ENCODE measurements at regions of chr2 and their contacts with region 1.

Region 1: GRCh38 chr2:96509114-96509846 is 4.1 kb upstream of the NEURL3 start:
- DNase-seq: peak; percentile 84
- H3K4me3 Mint-ChIP-seq: no peak overlapping the region
- H3K27ac Mint-ChIP-seq: no peak overlapping the region
- H3K4me1 Mint-ChIP-seq: peaks cover 16% of the 10 kb centered on the region
- H3K27me3 Mint-ChIP-seq: peaks cover 18% of the 10 kb centered on the region
- CTCF ChIP-seq: peak; percentile 97

Region 2: DNA sequence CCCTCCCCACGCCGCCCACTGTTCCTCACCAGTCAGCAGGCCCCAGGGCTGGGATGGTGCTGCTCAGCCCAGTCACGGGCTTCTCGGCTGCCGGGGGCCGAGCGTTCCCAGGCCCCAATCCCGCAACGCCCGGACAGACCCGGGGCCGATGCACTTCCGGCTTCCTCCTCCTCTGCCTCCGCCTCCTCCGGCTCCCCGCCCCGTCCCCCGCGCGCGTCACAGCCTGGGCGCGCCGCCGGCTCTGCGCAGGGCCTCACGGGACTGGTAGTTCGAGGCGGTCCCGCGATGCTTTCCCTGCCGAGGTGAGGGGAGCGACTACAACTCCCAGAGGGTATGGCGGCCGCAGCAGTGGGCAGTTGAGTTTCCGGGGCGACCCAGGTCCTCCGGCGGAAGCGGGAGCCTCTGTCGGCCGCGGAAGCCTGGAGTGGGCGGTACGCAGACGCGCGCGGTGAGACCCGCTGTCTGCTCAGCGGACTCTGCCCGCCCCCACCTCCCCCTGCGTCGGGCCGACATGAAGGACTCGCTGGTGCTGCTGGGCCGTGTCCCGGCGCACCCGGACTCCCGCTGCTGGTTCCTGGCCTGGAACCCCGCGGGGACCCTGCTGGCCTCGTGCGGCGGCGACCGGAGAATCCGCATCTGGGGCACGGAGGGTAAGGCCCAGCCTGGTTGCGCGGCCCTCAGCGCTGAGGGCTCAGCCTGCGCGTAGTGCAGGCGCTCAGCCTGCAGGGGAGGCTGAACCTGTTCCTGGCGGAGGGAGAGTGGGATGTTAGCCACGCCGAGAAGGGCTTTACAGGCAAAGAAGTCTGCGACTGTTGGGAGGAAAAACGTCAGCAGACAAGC is 243.2 kb before region 1 on chr2 and contains the starts of genes CIAO1 and TMEM127:
- CTCF ChIA-PET with region 1: interaction called, 7 read pairs
- POLR2A ChIA-PET with region 1: interaction called, 3 read pairs
- intact Hi-C with region 1: loop called (anchors 5 kb)
- DNase-seq: peak; percentile 98
- H3K4me3 Mint-ChIP-seq: peak within 1 kb of the TSS; percentile 93
- H3K27ac Mint-ChIP-seq: peak within 1 kb of the TSS; percentile 68
- H3K4me1 Mint-ChIP-seq: peaks cover 25% of the 10 kb centered on the region
- H3K27me3 Mint-ChIP-seq: no peaks in the 10 kb centered on the region
- CTCF ChIP-seq: no peak
- total RNA-seq, gene CIAO1: 62.3 and 63.3 TPM in 2 replicates
- total RNA-seq, gene TMEM127: 31.5 and 40.0 TPM in 2 replicates

Region 3: GRCh38 chr2:96359310-96359709 is 150.0 kb before region 1 on chr2:
- CTCF ChIA-PET with region 1: interaction called, 4 read pairs
- POLR2A ChIA-PET with region 1: no interaction called
- intact Hi-C with region 1: loop called (anchors 1 kb)
- DNase-seq: no peak
- H3K4me3 Mint-ChIP-seq: no peak overlapping the region
- H3K27ac Mint-ChIP-seq: no peak overlapping the region
- H3K4me1 Mint-ChIP-seq: no peaks in the 10 kb centered on the region
- H3K27me3 Mint-ChIP-seq: no peaks in the 10 kb centered on the region
- CTCF ChIP-seq: peak; percentile 10

Region 4: GRCh38 chr2:96493072-96493471 is 16.2 kb before region 1 on chr2:
- CTCF ChIA-PET with region 1: interaction called, 25 read pairs
- POLR2A ChIA-PET with region 1: no interaction called
- intact Hi-C with region 1: no loop called
- DNase-seq: peak; percentile 86
- H3K4me3 Mint-ChIP-seq: no peak overlapping the region
- H3K27ac Mint-ChIP-seq: no peak overlapping the region
- H3K4me1 Mint-ChIP-seq: peaks cover 5% of the 10 kb centered on the region
- H3K27me3 Mint-ChIP-seq: peaks cover 13% of the 10 kb centered on the region
- CTCF ChIP-seq: no peak

Region 5: DNA sequence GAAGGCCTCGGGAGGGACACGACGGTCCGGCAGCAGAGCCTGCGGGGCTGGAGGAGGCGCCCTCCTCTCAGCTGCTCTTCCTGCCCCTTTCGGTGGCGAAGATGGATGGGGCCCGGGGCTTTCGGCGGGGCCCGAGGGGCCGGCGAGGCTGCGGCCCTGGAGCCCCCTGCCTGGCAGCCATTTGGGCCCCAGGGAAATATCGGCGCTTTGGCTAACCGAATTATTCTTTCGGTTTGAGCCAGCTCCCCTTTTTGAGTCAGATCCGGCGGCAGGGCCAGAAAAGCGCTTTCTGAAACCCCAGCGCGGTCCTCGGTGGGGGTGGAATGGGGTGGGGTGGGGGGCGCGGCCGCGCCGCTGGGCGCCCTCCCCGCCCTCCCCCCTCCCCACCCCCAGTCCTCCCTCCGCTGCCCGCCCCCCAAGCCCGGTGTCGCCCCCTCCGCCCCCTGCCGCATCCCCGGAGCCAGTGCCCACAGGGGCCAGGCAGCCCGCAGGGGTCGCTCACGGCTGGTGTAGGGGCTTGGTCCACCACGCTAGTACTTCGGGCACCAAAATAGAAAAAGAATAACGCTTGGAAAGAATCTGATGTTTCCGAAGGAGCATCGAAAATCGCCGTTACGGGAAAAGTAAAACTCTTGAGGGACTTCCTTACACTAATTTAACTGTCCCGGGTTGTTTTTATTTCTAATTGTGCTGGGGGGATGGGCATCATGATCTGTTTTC is 18.2 kb after region 1 on chr2:
- CTCF ChIA-PET with region 1: interaction called, 10 read pairs
- POLR2A ChIA-PET with region 1: interaction called, 3 read pairs
- intact Hi-C with region 1: no loop called
- DNase-seq: no peak
- H3K4me3 Mint-ChIP-seq: no peak overlapping the region
- H3K27ac Mint-ChIP-seq: no peak overlapping the region
- H3K4me1 Mint-ChIP-seq: peaks cover 4% of the 10 kb centered on the region
- H3K27me3 Mint-ChIP-seq: peaks cover 15% of the 10 kb centered on the region
- CTCF ChIP-seq: no peak

Region 6: DNA sequence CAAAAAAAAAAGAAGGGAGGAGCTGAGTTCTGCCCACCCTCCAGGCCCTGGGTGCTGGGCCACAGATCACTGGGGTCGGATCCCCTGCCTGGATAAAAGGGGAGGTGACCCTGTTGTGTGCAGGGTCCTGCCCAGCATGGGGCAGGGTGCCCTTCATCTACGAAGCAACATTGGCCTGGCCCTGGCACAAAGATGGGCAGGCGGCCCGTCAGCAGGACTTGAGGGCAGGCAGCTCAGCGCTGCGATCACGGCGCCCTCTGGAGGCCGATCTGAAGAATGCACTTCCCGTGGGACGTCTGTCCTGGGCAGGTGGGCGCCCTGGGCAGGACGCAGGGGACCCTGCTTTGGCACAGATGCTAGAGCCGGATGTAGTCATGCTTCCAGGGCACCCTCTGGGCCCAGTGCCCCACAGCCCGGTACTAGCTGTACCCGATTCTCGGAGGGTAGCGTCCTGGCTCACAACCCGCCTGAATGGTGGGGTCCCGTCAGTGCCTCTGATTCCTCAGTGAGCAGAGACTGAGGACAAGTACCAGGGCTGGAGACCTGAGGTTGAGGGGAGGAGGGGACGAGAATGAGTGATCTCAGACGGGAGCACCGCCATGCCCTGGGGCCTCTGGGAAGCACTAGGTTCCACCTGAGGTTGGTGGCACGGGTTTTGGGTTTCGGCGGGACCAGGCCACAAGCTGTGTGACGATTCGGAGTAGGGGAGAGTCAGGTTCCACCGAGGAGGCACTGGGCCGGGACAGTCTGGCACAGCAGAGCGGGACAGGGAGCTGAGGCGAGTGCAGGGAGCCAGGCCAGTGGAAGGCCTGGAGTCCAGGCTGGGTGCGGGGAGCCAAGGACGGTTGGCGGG is 45.2 kb after region 1 on chr2:
- CTCF ChIA-PET with region 1: interaction called, 8 read pairs
- POLR2A ChIA-PET with region 1: interaction called, 5 read pairs
- intact Hi-C with region 1: loop called (anchors 2 kb)
- DNase-seq: peak; percentile 58
- H3K4me3 Mint-ChIP-seq: no peak overlapping the region
- H3K27ac Mint-ChIP-seq: no peak overlapping the region
- H3K4me1 Mint-ChIP-seq: peaks cover 7% of the 10 kb centered on the region
- H3K27me3 Mint-ChIP-seq: no peaks in the 10 kb centered on the region
- CTCF ChIP-seq: peak; percentile 89

Region 7: DNA sequence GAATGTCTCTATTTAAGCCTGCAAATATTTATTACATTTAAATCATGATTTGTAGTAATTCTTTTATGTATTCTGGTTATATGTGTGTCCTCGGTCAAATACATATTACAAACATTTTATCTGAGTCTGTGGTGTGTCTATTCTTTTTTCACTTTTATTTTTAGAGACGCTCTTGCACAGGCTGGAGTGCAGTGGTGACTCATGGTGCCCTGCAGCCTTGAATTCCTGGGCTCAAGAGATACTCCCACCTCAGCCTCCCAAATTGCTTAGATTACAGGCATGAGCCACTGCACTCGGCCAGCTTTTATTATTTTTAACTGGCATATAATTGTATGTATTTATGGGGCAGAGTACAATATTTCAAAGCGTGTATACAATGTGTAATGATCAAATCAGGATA is 74.7 kb after region 1 on chr2:
- CTCF ChIA-PET with region 1: no interaction called
- POLR2A ChIA-PET with region 1: no interaction called
- intact Hi-C with region 1: no loop called
- DNase-seq: peak; percentile 64
- H3K4me3 Mint-ChIP-seq: no peak overlapping the region
- H3K27ac Mint-ChIP-seq: no peak overlapping the region
- H3K4me1 Mint-ChIP-seq: peaks cover 10% of the 10 kb centered on the region
- H3K27me3 Mint-ChIP-seq: no peaks in the 10 kb centered on the region
- CTCF ChIP-seq: no peak

Region 8: GRCh38 chr2:96715658-96716057 is 206.4 kb after region 1 on chr2:
- CTCF ChIA-PET with region 1: no interaction called
- POLR2A ChIA-PET with region 1: no interaction called
- intact Hi-C with region 1: no loop called
- DNase-seq: no peak
- H3K4me3 Mint-ChIP-seq: no peak overlapping the region
- H3K27ac Mint-ChIP-seq: no peak overlapping the region
- H3K4me1 Mint-ChIP-seq: no peaks in the 10 kb centered on the region
- H3K27me3 Mint-ChIP-seq: no peaks in the 10 kb centered on the region
- CTCF ChIP-seq: no peak

Measured in MCF 10A (cell line).